GM12878 (cell line): ENCODE measurements at regions of chr7 and their contacts with region 1.

Region 1: DNA sequence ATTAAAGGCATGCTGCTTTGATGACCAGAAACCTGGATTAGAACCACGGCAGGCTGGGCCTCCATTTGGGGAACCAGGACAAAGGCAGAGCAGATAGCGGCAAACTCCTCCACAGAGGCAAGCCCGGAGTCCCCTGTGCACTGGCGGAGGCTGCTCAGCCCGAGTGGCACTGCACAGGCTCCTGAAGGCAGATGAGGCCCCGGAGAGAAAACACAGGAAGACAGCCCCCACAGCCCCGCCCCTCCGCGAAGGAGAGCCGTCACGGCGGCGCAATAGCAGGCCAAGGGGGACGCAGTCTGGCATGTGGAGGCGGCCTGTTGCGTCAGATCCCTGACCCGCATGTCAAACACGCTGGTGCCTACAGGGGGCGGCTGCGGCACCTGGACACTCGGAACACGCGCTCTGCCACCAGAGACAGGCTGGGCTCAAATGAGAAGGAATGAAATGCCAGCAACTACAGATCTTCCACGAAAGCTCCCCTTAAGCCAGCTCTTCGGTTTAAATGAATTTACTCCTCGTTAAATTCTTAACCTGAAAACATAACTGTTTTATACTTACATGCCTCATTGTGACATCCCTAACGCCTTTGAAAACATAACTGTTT is 128.5 kb downstream of the MAD1L1 start:
- DNase-seq: no peak
- ATAC-seq: peak; percentile 48
- H3K4me3 ChIP-seq: no peak overlapping the region
- H3K27ac ChIP-seq: no peak overlapping the region
- H3K4me1 ChIP-seq: peaks cover 15% of the 10 kb centered on the region
- H3K27me3 ChIP-seq: no peaks in the 10 kb centered on the region
- CTCF ChIP-seq: peak; percentile 15 to 47 (median 37); a peak in 4 of 6 replicates
- EP300 ChIP-seq: no peak
- POLR2A ChIP-seq: no peak
- RAD21 ChIP-seq: no peak

Region 2: GRCh38 chr7:1725199-1725690 is 379.0 kb before region 1 on chr7:
- CTCF ChIA-PET with region 1: no interaction called
- POLR2A ChIA-PET with region 1: no interaction called
- RAD21 ChIA-PET with region 1: no interaction called
- SMC1A ChIA-PET with region 1: no interaction called
- in situ Hi-C with region 1: no loop called
- intact Hi-C with region 1: no loop called
- DNase-seq: no peak
- ATAC-seq: no peak
- H3K4me3 ChIP-seq: no peak overlapping the region
- H3K27ac ChIP-seq: no peak overlapping the region
- H3K4me1 ChIP-seq: no peaks in the 10 kb centered on the region
- H3K27me3 ChIP-seq: no peaks in the 10 kb centered on the region
- CTCF ChIP-seq: no peak
- EP300 ChIP-seq: no peak
- POLR2A ChIP-seq: no peak
- RAD21 ChIP-seq: no peak

Region 3: DNA sequence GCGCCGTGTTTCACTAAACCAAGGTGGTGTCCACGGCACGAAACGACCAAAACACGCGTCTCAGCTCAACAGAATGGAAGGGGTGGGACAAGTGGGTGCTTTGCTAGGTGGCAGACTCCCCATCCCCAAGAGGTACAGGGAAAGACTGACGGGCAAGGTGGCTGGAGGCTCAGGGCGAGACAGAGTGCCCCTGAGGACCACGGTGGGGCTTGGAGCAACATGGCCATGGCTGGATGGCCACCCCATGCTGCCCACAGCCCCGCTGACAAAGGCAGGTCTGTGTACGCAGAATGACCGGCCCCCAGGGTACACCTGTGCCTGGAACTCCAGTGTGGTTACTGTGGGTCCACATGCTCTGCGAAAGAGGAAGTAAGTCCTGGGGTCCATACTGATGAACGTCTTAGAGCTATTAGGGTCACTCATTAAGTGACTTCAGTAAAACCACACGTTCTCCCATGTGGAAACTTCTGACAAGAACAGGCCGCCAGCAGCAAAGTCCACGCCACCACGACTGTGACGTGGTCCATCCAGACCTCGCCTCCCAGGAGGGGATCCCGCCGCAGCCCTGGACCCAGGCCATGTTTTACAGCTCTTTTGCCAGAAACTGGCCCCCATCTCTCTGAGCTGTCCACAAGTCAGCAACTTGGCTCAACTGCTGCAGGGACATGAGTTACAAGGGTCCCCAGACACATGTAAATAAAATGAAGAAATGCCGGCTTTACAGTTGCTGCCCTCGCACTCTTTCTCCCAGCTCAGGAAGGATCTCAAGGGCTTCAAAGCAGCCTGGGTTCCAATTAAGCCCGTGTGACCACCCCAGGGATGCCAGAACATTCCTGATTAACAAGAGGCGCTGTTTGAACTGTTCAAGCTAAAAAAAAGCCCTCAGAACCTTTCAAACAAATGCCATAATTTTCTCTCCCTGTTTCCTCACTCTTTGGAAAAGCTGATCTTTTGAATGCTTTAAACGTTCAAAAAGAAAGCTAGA is 61.7 kb after region 1 on chr7:
- CTCF ChIA-PET with region 1: interaction called, 3 read pairs
- POLR2A ChIA-PET with region 1: interaction called, 4 read pairs
- RAD21 ChIA-PET with region 1: interaction called, 6 read pairs
- SMC1A ChIA-PET with region 1: interaction called, 6 read pairs
- in situ Hi-C with region 1: no loop called
- intact Hi-C with region 1: loop called (anchors 5 kb)
- DNase-seq: peak; percentile 79
- ATAC-seq: peak; percentile 95
- H3K4me3 ChIP-seq: no peak overlapping the region; the same call in 1 of the 2 replicates
- H3K27ac ChIP-seq: peak overlapping the region; percentile 74
- H3K4me1 ChIP-seq: peaks cover 22% of the 10 kb centered on the region
- H3K27me3 ChIP-seq: no peaks in the 10 kb centered on the region
- CTCF ChIP-seq: no peak
- EP300 ChIP-seq: peak; percentile 93 to 97
- POLR2A ChIP-seq: no peak
- RAD21 ChIP-seq: no peak

Region 4: GRCh38 chr7:2195400-2196246 is 91.4 kb after region 1 on chr7:
- CTCF ChIA-PET with region 1: interaction called, 27 read pairs
- POLR2A ChIA-PET with region 1: no interaction called
- RAD21 ChIA-PET with region 1: interaction called, 14 read pairs
- SMC1A ChIA-PET with region 1: interaction called, 15 read pairs
- in situ Hi-C with region 1: no loop called
- intact Hi-C with region 1: loop called (anchors 2 kb)
- DNase-seq: no peak
- ATAC-seq: no peak
- H3K4me3 ChIP-seq: no peak overlapping the region
- H3K27ac ChIP-seq: no peak overlapping the region
- H3K4me1 ChIP-seq: no peaks in the 10 kb centered on the region
- H3K27me3 ChIP-seq: no peaks in the 10 kb centered on the region
- CTCF ChIP-seq: no peak
- EP300 ChIP-seq: no peak
- POLR2A ChIP-seq: no peak
- RAD21 ChIP-seq: no peak